HepG2 (cell line): ENCODE measurements at regions of chr18 and their contacts with region 1.

Region 1: DNA sequence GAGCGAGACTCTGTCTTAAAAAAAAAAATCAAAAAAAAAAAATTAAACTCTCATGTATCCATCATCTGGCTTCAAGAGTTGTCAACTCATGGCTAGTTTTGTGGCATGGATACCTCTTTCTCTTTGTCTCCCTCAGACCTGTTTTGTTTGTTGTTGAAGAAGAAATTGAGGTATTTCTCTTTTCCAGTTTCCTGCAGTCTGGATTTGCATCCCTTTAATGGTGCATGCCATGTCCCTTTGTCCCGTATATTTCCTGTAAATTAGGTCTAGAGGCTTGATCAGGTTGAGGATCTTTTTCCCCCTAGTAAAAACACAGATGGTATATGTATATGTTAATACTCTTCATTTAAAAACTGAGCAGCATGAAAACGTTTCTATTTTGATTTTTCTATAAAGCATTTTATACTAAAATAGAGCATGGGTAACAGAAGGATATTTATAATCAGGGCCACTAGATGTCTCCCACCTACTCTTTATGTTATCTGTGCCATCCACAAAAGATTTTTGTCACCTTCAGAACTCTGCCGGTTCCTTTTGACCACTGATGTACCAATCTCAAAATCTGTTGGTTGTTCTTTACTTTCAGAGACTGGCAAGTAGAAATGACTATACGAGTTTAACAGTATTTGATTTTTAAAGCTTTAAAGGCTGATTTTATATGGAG is 80.1 kb downstream of the GALNT1 start:
- DNase-seq: peak; percentile 17
- ATAC-seq: peak; percentile 56
- H3K4me3 ChIP-seq: no peak overlapping the region
- H3K27ac ChIP-seq: no peak overlapping the region
- H3K4me1 ChIP-seq: no peaks in the 10 kb centered on the region
- H3K27me3 ChIP-seq: no peaks in the 10 kb centered on the region; a peak in 1 of 5 replicates
- CTCF ChIP-seq: peak; percentile 52
- EP300 ChIP-seq: no peak
- POLR2A ChIP-seq: no peak
- RAD21 ChIP-seq: 0 out of 2 replicates have a peak, but pooled peaks have one; percentile 15

Region 2: GRCh38 chr18:35775887-35776286 is 114.3 kb after region 1 on chr18:
- CTCF ChIA-PET with region 1: interaction called, 9 read pairs
- POLR2A ChIA-PET with region 1: no interaction called
- in situ Hi-C with region 1: no loop called
- intact Hi-C with region 1: loop called (anchors 1 kb)
- DNase-seq: no peak
- ATAC-seq: no peak
- H3K4me3 ChIP-seq: no peak overlapping the region
- H3K27ac ChIP-seq: no peak overlapping the region
- H3K4me1 ChIP-seq: no peaks in the 10 kb centered on the region
- H3K27me3 ChIP-seq: no peaks in the 10 kb centered on the region; a peak in 2 of 5 replicates
- CTCF ChIP-seq: no peak
- EP300 ChIP-seq: no peak
- POLR2A ChIP-seq: no peak
- RAD21 ChIP-seq: no peak

Region 3: GRCh38 chr18:35949903-35950627 is 288.4 kb after region 1 on chr18:
- CTCF ChIA-PET with region 1: no interaction called
- POLR2A ChIA-PET with region 1: no interaction called
- in situ Hi-C with region 1: no loop called
- intact Hi-C with region 1: loop called (anchors 5 kb)
- DNase-seq: peak; percentile 56
- ATAC-seq: peak; percentile 90
- H3K4me3 ChIP-seq: peak overlapping the region; percentile 59 to 81 (median 65)
- H3K27ac ChIP-seq: no peak overlapping the region
- H3K4me1 ChIP-seq: peaks cover 11% of the 10 kb centered on the region
- H3K27me3 ChIP-seq: peaks cover 0 to 8% of the 10 kb centered on the region in 2 experiments; a peak in 3 of 5 replicates
- CTCF ChIP-seq: peak; percentile 86
- EP300 ChIP-seq: no peak
- POLR2A ChIP-seq: no peak
- RAD21 ChIP-seq: peak; percentile 63